ENCODE measurements at regions of chr4 and their contacts with region 1.

Region 1: GRCh38 chr4:80125252-80126177 is 52.5 kb upstream of the ANTXR2 start:
- DNase-seq: peak; percentile 60 to 71 (median 68)
- H3K4me3 ChIP-seq: no peak overlapping the region
- H3K4me3 Mint-ChIP-seq: peak overlapping the region in 7 of 8 donors; percentile 41 to 72 (median 50)
- H3K27ac ChIP-seq: peak overlapping the region; percentile 77
- H3K27ac Mint-ChIP-seq: peak overlapping the region; percentile 86 to 97 (median 91)
- H3K4me1 ChIP-seq: peaks cover 56% of the 10 kb centered on the region
- H3K4me1 Mint-ChIP-seq: peaks cover 43 to 63% (median 51%) of the 10 kb centered on the region in 4 donors
- H3K27me3 ChIP-seq: no peaks in the 10 kb centered on the region
- H3K27me3 Mint-ChIP-seq: no peaks in the 10 kb centered on the region

Region 2: DNA sequence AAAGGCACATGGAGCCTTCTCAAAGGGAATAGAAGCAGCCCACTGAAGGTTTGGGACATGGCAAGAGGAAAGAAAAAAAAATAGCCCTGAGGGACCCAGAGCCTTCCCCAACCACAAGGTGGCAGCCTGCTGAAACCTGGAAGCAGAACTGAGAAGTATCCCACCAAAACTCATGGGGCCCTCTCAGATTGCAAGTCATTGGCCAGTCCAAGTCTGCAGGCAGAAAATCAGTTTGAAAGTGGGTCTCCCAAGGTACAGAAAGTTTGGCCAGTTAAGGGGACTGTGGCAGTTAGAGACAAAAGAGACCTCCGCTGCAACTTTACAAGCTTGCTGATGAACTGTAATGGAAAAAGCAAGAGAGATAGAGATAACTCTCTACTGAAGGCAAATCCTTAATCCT is 208.3 kb before region 1 on chr4:
- CTCF ChIA-PET with region 1: no interaction called
- POLR2A ChIA-PET with region 1: no interaction called
- intact Hi-C with region 1: loop called (anchors 2 kb)
- DNase-seq: peak; percentile 31 to 35 (median 32)
- H3K4me3 ChIP-seq: no peak overlapping the region
- H3K4me3 Mint-ChIP-seq: no peak overlapping the region
- H3K27ac ChIP-seq: no peak overlapping the region
- H3K27ac Mint-ChIP-seq: peak overlapping the region in 1 of 7 donors; percentile 71
- H3K4me1 ChIP-seq: peaks cover 11% of the 10 kb centered on the region
- H3K4me1 Mint-ChIP-seq: peaks cover 5 to 26% (median 13%) of the 10 kb centered on the region in 4 donors
- H3K27me3 ChIP-seq: no peaks in the 10 kb centered on the region
- H3K27me3 Mint-ChIP-seq: no peaks in the 10 kb centered on the region

Region 3: GRCh38 chr4:80072744-80073472 is 52.6 kb before region 1 on chr4 and contains the start of gene ANTXR2:
- CTCF ChIA-PET with region 1: interaction called, 24 read pairs
- POLR2A ChIA-PET with region 1: interaction called, 32 read pairs
- intact Hi-C with region 1: loop called (anchors 1 kb)
- DNase-seq: peak; percentile 64 to 86 (median 68)
- H3K4me3 ChIP-seq: peak within 1 kb of the TSS; percentile 68 to 75
- H3K4me3 Mint-ChIP-seq: peak within 1 kb of the TSS; percentile 97 to 99 (median 98)
- H3K27ac ChIP-seq: peak within 1 kb of the TSS; percentile 86
- H3K27ac Mint-ChIP-seq: peak within 1 kb of the TSS; percentile 97 to 99 (median 98)
- H3K4me1 ChIP-seq: peaks cover 74% of the 10 kb centered on the region
- H3K4me1 Mint-ChIP-seq: peaks cover 47 to 86% (median 59%) of the 10 kb centered on the region in 4 donors
- H3K27me3 ChIP-seq: no peaks in the 10 kb centered on the region
- H3K27me3 Mint-ChIP-seq: no peaks in the 10 kb centered on the region
- total RNA-seq, gene ANTXR2: 90.1 to 91.6 TPM

Region 4: GRCh38 chr4:80153874-80154544 is 28.5 kb after region 1 on chr4:
- CTCF ChIA-PET with region 1: interaction called, 30 read pairs
- POLR2A ChIA-PET with region 1: interaction called, 5 read pairs
- intact Hi-C with region 1: no loop called
- DNase-seq: no peak
- H3K4me3 ChIP-seq: no peak overlapping the region
- H3K4me3 Mint-ChIP-seq: peak overlapping the region in 5 of 8 donors; percentile 5 to 51 (median 11)
- H3K27ac ChIP-seq: no peak overlapping the region
- H3K27ac Mint-ChIP-seq: peak overlapping the region in 4 of 7 donors; percentile 1 to 30 (median 13)
- H3K4me1 ChIP-seq: peaks cover 5% of the 10 kb centered on the region
- H3K4me1 Mint-ChIP-seq: peaks cover 0 to 15% (median 5%) of the 10 kb centered on the region in 4 donors
- H3K27me3 ChIP-seq: no peaks in the 10 kb centered on the region
- H3K27me3 Mint-ChIP-seq: peaks cover 0 to 1% of the 10 kb centered on the region in 2 donors

Region 5: GRCh38 chr4:80184053-80184790 is 58.7 kb after region 1 on chr4:
- CTCF ChIA-PET with region 1: interaction called, 291 read pairs
- POLR2A ChIA-PET with region 1: interaction called, 127 read pairs
- intact Hi-C with region 1: loop called (anchors 1 kb)
- DNase-seq: peak; percentile 89 to 93 (median 91)
- H3K4me3 ChIP-seq: peak overlapping the region; percentile 88 to 99
- H3K4me3 Mint-ChIP-seq: peak overlapping the region; percentile 95 to 100 (median 100)
- H3K27ac ChIP-seq: peak overlapping the region; percentile 85
- H3K27ac Mint-ChIP-seq: peak overlapping the region; percentile 94 to 99 (median 98)
- H3K4me1 ChIP-seq: peaks cover 50% of the 10 kb centered on the region
- H3K4me1 Mint-ChIP-seq: peaks cover 38 to 71% (median 47%) of the 10 kb centered on the region in 4 donors
- H3K27me3 ChIP-seq: no peaks in the 10 kb centered on the region
- H3K27me3 Mint-ChIP-seq: no peaks in the 10 kb centered on the region

Region 6: GRCh38 chr4:80202190-80202711 is 76.7 kb after region 1 on chr4:
- CTCF ChIA-PET with region 1: interaction called, 55 read pairs
- POLR2A ChIA-PET with region 1: interaction called, 49 read pairs
- intact Hi-C with region 1: loop called (anchors 1 kb)
- DNase-seq: peak; percentile 72 to 81 (median 77)
- H3K4me3 ChIP-seq: peak overlapping the region; percentile 23 to 77
- H3K4me3 Mint-ChIP-seq: peak overlapping the region; percentile 82 to 94 (median 88)
- H3K27ac ChIP-seq: peak overlapping the region; percentile 82
- H3K27ac Mint-ChIP-seq: peak overlapping the region; percentile 89 to 93 (median 91)
- H3K4me1 ChIP-seq: peaks cover 17% of the 10 kb centered on the region
- H3K4me1 Mint-ChIP-seq: peaks cover 23 to 34% (median 27%) of the 10 kb centered on the region in 4 donors
- H3K27me3 ChIP-seq: no peaks in the 10 kb centered on the region
- H3K27me3 Mint-ChIP-seq: no peaks in the 10 kb centered on the region

Measured in CD4-positive, alpha-beta memory T cell (primary cell).